ENCODE measurements at regions of chr4 and their contacts with region 1.

Region 1: DNA sequence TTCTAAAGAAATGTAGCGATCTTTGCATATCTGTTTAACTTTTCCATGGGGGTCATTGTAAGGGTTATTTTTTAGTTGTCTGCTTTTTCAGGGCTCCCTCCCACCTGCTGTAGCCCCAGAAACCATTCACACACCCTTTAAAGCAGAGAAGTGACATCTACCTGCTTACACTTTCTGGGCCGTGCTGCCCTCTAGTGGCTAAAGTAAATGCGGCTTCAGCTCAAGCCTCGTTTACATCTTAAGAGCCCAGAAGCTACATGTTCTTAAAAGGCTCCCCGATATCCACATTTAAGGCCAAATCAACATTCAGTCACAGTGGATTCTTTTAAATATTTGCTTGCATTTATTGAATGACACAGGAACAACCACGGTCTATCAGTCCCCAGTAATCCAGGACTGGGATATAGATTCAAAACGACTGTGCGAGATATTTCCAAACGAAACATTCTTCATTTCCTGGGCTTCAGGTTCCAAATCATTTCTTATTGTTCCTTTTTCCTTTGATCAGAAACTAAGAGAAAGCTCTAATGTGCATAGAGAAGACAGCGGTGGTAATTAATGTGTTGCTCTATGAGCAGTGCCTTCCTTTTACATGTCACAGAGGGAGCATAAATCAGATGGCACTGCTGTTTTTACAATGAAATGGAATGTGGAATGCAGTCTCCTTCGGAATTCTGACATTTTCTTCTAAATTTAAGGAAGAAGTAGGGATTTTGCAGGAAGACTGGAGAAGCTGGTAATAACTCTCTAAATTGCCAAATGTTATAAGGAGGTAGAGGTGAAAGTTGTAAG is 119.9 kb downstream of the RASGEF1B start:
- DNase-seq: peak; percentile 18 to 73 (median 67)
- ATAC-seq: peak; percentile 57
- H3K4me3 ChIP-seq: no peak overlapping the region
- H3K4me3 Mint-ChIP-seq: no peak overlapping the region
- H3K27ac ChIP-seq: no peak overlapping the region
- H3K27ac Mint-ChIP-seq: no peak overlapping the region
- H3K4me1 ChIP-seq: no peaks in the 10 kb centered on the region
- H3K4me1 Mint-ChIP-seq: no peaks in the 10 kb centered on the region
- H3K27me3 ChIP-seq: no peaks in the 10 kb centered on the region
- H3K27me3 Mint-ChIP-seq: peaks cover 8% of the 10 kb centered on the region
- CTCF ChIP-seq: peak; percentile 89

Region 2: DNA sequence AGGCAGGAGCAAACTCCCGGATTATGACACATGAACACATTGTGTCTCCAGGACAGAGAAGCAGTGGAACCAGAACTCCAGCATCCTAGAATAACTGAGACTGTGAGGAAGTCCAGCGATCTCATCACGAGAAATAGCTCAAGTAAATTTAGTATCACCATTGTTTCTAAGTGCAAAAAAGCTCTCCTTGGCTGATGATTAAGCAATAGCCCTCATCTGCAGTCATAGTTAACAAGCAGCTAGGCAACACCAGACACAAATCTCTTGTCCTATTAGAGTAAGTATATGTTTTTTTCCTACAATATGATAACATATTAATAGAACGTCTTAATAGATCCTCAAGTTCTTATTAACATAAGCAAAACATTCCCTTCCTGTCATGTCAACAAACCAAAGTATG is 1018.7 kb before region 1 on chr4:
- CTCF ChIA-PET with region 1: no interaction called
- POLR2A ChIA-PET with region 1: no interaction called
- intact Hi-C with region 1: no loop called
- DNase-seq: no peak
- ATAC-seq: no peak
- H3K4me3 ChIP-seq: no peak overlapping the region
- H3K4me3 Mint-ChIP-seq: no peak overlapping the region
- H3K27ac ChIP-seq: no peak overlapping the region
- H3K27ac Mint-ChIP-seq: no peak overlapping the region
- H3K4me1 ChIP-seq: peaks cover 5% of the 10 kb centered on the region
- H3K4me1 Mint-ChIP-seq: peaks cover 14% of the 10 kb centered on the region
- H3K27me3 ChIP-seq: peaks cover 3 to 7% of the 10 kb centered on the region in 2 experiments
- H3K27me3 Mint-ChIP-seq: peaks cover 20% of the 10 kb centered on the region
- CTCF ChIP-seq: no peak

Region 3: DNA sequence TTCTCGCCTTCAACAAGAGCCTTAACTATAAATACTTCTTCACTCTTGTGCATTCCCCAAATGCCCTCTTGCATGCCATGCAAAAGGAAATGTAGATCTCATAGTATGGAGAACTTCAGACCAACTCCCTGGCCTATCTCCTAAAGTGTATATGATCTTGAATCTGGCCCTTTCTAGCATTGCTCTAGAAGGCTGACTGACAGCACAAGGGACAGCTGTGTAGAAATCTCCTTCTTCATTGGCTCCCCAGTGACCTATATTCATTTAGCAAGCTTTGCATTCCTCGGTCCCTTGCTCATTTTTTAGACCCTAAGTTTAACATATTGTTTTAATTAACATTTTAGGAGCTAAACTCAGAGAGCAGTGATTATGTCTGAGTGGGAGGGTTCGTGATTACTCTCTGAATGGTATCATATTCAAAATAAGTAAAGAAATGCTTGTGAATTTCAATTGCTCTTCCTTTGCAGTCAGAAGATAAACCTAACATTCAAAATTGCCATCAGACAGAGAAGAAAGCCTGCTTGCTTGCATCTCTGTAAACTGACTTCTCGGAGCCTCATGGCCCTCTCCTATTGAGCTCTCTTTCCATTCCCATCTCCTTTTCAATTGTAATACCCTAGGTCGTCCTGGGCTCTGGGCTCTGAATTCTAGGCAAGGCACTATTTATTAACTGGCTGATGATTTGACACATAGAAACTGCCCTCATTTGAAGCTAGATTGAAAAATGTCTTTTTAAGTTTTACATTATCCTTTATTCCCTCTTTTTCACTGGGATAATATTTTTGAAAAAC is 16.5 kb before region 1 on chr4:
- CTCF ChIA-PET with region 1: interaction called, 10 read pairs
- POLR2A ChIA-PET with region 1: no interaction called
- intact Hi-C with region 1: no loop called
- DNase-seq: no peak
- ATAC-seq: no peak
- H3K4me3 ChIP-seq: no peak overlapping the region
- H3K4me3 Mint-ChIP-seq: no peak overlapping the region
- H3K27ac ChIP-seq: no peak overlapping the region
- H3K27ac Mint-ChIP-seq: no peak overlapping the region
- H3K4me1 ChIP-seq: no peaks in the 10 kb centered on the region
- H3K4me1 Mint-ChIP-seq: no peaks in the 10 kb centered on the region
- H3K27me3 ChIP-seq: no peaks in the 10 kb centered on the region
- H3K27me3 Mint-ChIP-seq: no peaks in the 10 kb centered on the region
- CTCF ChIP-seq: no peak

Region 4: DNA sequence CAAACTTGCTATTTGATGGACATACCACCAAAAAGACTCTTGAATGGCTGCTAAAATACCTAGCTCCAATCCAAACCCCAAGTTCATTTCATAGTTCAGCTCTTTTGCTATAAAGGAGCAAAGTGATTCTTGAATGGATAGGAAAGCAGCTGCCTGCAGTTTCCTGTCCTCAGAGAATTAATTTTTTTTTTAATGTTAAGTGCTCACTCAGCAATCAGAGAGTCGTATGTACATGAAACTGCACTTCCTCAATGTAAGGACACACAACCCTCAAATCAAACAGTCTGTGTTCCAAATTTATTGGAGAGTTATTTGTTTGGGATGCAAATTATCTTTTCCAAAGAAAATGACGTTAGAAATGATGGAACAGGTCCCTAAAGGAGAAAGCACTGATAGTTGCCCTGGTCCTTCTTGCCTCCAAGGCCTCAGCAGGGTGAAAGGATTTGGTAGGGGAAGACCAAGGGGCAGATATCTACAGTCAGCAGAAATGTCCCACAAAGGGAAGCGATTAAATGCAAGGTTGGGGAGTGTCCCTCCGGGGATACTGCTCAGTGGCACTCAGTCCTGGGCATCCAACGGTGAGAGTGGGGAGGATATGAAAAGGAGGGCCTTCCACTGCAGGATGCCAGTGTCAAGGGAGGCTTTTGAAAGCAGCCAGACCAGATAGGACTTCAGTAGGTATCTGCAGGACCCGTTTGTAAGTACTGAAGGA is 187.0 kb after region 1 on chr4:
- CTCF ChIA-PET with region 1: no interaction called
- POLR2A ChIA-PET with region 1: no interaction called
- intact Hi-C with region 1: no loop called
- DNase-seq: no peak
- ATAC-seq: no peak
- H3K4me3 ChIP-seq: no peak overlapping the region
- H3K4me3 Mint-ChIP-seq: no peak overlapping the region
- H3K27ac ChIP-seq: no peak overlapping the region
- H3K27ac Mint-ChIP-seq: no peak overlapping the region
- H3K4me1 ChIP-seq: no peaks in the 10 kb centered on the region
- H3K4me1 Mint-ChIP-seq: no peaks in the 10 kb centered on the region
- H3K27me3 ChIP-seq: no peaks in the 10 kb centered on the region
- H3K27me3 Mint-ChIP-seq: no peaks in the 10 kb centered on the region
- CTCF ChIP-seq: no peak